ENCODE measurements at regions of chr1 and their contacts with region 1.

Region 1: DNA sequence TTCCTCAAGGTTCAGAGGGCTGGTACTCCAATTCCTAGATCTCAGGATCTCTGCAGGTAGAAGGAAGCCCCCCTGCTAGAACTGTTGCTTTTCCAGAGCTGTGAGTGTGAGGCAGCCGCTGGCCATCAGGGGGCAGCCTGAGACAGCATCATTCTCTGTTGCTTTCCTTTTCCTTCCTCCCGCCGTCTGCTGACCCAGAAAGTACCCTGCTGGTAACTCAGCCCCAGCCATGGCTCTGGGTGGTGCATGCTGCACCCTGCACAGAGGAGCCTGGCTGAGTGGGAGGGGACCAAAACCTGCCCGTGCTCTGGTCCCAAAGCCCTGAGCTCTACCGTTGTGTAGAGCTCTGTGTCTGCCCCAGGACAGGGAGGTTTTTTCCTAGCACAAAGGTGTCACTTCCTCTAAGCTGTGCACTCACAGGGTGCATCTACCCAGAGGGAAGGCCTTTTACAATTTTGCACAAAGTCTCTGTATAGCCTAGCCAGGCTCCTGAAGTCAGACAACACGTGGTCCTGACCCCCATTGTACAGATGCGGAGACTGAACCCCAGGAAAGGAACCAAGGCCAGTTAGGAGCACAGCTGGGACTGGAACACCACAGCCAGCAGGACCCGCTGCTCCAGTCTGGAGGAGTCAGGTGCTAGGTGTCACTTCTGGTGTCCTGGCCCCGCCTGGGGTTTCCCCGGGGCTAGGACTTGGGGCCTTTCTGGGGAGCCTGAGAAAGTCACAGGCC is 5.6 kb upstream of the FAM131C start:
- DNase-seq: peak in 3 of 4 donors; percentile 65 to 81 (median 76)
- ATAC-seq: peak; percentile 85
- H3K4me3 ChIP-seq: no peak overlapping the region
- H3K27ac ChIP-seq: no peak overlapping the region
- H3K4me1 ChIP-seq: peaks cover 0 to 6% of the 10 kb centered on the region in 2 donors
- H3K27me3 ChIP-seq: peaks cover 0 to 10% of the 10 kb centered on the region in 2 donors
- CTCF ChIP-seq: peak; percentile 68 to 73

Region 2: GRCh38 chr1:16366722-16367257 is 287.7 kb after region 1 on chr1 and contains the start of gene SZRD1:
- intact Hi-C with region 1: loop called in 1 of 2 experiments (anchors 10 kb)
- DNase-seq: peak; percentile 97 to 100 (median 99)
- ATAC-seq: peak; percentile 89
- H3K4me3 ChIP-seq: peak within 1 kb of the TSS; percentile 76 to 99
- H3K27ac ChIP-seq: peak within 1 kb of the TSS; percentile 96 to 98
- H3K4me1 ChIP-seq: peaks cover 14 to 74% of the 10 kb centered on the region in 2 donors
- H3K27me3 ChIP-seq: no peaks in the 10 kb centered on the region
- CTCF ChIP-seq: no peak
- polyA plus RNA-seq, gene SZRD1: 69.9 to 97.8 (median 89.6) TPM

Measured in left lung (tissue), 14 donors.